HEK293 (cell line): ENCODE measurements at regions of chr17 and their contacts with region 1.

Region 1: GRCh38 chr17:42438600-42439567 is 15.8 kb upstream of the CAVIN1 start:
- H3K4me3 ChIP-seq: no peak overlapping the region
- H3K27ac ChIP-seq: no peak overlapping the region
- H3K4me1 ChIP-seq: peaks cover 2% of the 10 kb centered on the region; the same call in 1 of the 2 replicates
- CTCF ChIP-seq: no peak; the same call in 1 of the 2 replicates

Region 2: DNA sequence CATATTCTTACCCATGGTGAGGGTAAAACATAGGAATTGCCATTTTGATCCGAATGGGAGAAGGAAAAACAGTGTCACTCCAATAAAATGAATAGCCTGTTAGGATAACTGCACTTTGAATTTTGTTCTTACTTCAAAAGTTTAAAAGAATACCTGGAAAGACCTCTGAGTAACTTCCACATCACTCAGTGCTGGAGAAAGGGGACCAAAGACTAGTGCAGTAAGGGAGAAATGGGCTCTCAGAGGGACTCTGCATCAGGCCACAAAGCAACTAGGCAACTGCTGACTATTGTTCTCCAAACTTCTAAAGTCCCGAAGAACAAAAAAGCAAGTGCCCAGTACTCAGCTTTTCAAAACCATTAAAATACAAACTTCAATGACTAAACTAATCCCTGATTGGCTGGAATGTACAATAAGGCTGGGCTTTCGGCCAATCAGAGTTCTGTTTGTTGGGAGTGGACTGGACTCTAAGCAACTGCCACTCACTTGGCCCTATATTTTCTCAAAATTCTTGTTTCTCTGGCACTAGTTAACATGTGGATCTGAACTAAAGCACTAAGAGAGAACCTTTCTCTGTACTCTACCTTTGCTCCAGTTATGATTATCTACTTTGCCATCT is 427.9 kb before region 1 on chr17:
- CTCF ChIA-PET with region 1: no interaction called
- POLR2A ChIA-PET with region 1: no interaction called
- H3K4me3 ChIP-seq: no peak overlapping the region
- H3K27ac ChIP-seq: no peak overlapping the region
- H3K4me1 ChIP-seq: peaks cover 5% of the 10 kb centered on the region; the same call in 1 of the 2 replicates
- CTCF ChIP-seq: no peak

Region 3: GRCh38 chr17:42517516-42517915 is 78.6 kb after region 1 on chr17:
- CTCF ChIA-PET with region 1: interaction called, 13 read pairs
- POLR2A ChIA-PET with region 1: no interaction called
- H3K4me3 ChIP-seq: no peak overlapping the region
- H3K27ac ChIP-seq: no peak overlapping the region
- H3K4me1 ChIP-seq: peaks cover 25% of the 10 kb centered on the region
- CTCF ChIP-seq: peak; percentile 94

Region 4: GRCh38 chr17:42527273-42527703 is 88.4 kb after region 1 on chr17:
- CTCF ChIA-PET with region 1: interaction called, 10 read pairs
- POLR2A ChIA-PET with region 1: no interaction called
- H3K4me3 ChIP-seq: no peak overlapping the region
- H3K27ac ChIP-seq: no peak overlapping the region
- H3K4me1 ChIP-seq: peaks cover 15% of the 10 kb centered on the region
- CTCF ChIP-seq: peak; percentile 87